ENCODE measurements at regions of chr4 and their contacts with region 1.

Region 1: DNA sequence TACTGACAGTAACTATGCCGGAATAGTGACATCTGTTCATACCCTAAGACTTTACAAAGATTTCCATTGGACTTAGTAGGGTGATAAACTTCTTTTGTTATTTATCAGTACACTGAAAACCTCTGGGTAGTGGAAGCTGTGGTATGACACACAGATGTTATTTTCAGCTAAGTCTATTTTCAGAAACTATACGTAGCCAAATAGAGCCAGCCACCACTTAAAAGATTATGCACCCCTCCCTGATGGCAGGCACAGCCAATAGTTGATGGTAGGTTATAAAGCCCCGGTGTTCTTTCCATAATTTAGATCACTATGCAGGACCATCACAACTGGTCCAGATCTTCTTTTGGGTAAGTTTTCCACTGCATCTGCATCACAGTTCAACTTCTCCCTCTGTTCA is 1603.2 kb upstream of the PABPC4L start:
- DNase-seq: no peak
- H3K4me3 ChIP-seq: no peak overlapping the region
- H3K27ac ChIP-seq: no peak overlapping the region
- H3K4me1 ChIP-seq: no peaks in the 10 kb centered on the region
- H3K27me3 ChIP-seq: no peaks in the 10 kb centered on the region
- CTCF ChIP-seq: no peak
- POLR2A ChIP-seq: no peak

Region 2: GRCh38 chr4:135192751-135193535 is 611.8 kb before region 1 on chr4:
- intact Hi-C with region 1: loop called (anchors 10 kb)
- DNase-seq: no peak
- H3K4me3 ChIP-seq: no peak overlapping the region
- H3K27ac ChIP-seq: no peak overlapping the region
- H3K4me1 ChIP-seq: no peaks in the 10 kb centered on the region
- H3K27me3 ChIP-seq: no peaks in the 10 kb centered on the region
- CTCF ChIP-seq: no peak
- POLR2A ChIP-seq: no peak